ENCODE measurements at regions of chrX and their contacts with region 1.

Region 1: DNA sequence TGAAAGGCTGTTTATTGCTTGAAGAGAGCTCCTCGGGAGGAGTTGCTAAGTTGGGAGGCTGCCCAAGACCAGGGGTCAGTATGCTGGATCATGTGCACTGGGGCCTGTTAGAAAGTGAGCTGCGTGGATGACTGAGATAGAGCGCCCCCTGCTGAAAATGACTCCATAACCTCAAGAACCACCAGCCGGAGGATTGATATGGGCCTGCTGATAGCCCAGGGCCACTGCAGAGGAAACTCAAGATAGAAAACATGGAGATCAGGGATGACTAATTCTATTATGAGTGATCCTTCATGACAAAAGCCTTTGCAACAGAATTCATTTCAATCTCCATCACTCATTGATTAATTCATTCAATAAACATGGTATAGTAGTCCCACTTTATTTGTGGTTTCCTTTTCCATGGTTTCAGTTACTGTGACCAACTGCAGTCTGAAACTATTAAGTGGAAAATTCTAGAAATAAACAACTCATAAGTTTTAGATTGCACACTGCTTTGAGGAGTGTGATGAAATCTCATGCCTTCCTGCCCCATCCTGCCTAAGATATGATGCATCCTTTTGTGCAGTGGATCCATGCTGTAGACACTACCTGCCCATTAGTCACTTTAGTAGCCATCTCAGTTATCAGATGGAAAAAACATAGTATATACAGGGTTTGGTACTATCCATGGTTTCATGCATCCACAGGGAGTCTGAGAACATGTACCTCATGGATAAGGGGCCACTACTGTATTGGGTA is 126.7 kb upstream of the MBNL3 start:
- DNase-seq: no peak
- H3K4me3 ChIP-seq: no peak overlapping the region; a peak in 1 of 4 replicates
- H3K27ac ChIP-seq: no peak overlapping the region
- H3K4me1 ChIP-seq: no peaks in the 10 kb centered on the region
- H3K27me3 ChIP-seq: peaks cover 6% of the 10 kb centered on the region; the same call in 1 of the 2 replicates
- CTCF ChIP-seq: peak; percentile 57
- EP300 ChIP-seq: no peak
- RAD21 ChIP-seq: peak; percentile 31

Region 2: DNA sequence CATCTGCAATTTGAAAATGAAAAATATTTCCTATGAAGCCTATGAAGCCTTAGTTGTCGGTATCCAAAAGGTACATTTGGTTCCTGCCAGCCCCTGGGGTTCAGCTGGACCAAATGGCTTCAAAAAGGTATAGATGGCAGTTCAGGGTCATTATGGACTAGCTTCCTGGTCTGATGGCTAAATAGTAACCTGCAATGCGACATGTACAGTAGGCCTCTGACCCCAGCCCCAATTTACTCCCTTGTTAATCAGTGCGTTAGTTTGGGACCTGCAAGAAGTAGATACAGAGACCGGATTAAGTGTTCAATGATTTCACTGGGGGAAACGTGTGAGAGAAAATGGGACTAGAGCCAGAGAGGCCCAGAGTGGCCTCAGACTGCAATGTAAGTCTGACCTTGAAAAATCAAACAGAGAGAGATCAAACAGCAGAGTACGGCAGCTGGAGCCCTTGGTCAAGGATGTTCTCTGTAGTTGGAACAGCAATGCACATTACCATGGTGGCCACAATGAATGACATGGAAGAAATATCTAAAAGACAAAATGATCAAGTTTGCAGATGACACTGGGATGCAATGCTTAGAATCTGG is 11.8 kb before region 1 on chrX:
- CTCF ChIA-PET with region 1: interaction called, 10 read pairs
- POLR2A ChIA-PET with region 1: no interaction called
- DNase-seq: no peak
- H3K4me3 ChIP-seq: no peak overlapping the region
- H3K27ac ChIP-seq: no peak overlapping the region
- H3K4me1 ChIP-seq: no peaks in the 10 kb centered on the region
- H3K27me3 ChIP-seq: peaks cover 14% of the 10 kb centered on the region; the same call in 1 of the 2 replicates
- CTCF ChIP-seq: no peak
- EP300 ChIP-seq: no peak
- RAD21 ChIP-seq: no peak

Region 3: GRCh38 chrX:132631579-132632232 is 16.1 kb after region 1 on chrX:
- CTCF ChIA-PET with region 1: interaction called, 10 read pairs
- POLR2A ChIA-PET with region 1: no interaction called
- DNase-seq: peak; percentile 5
- H3K4me3 ChIP-seq: no peak overlapping the region
- H3K27ac ChIP-seq: no peak overlapping the region
- H3K4me1 ChIP-seq: no peaks in the 10 kb centered on the region
- H3K27me3 ChIP-seq: peaks cover 20% of the 10 kb centered on the region
- CTCF ChIP-seq: peak; percentile 72
- EP300 ChIP-seq: no peak
- RAD21 ChIP-seq: peak; percentile 64